Endothelial cell of umbilical vein (primary cell): ENCODE measurements at regions of chr15 and their contacts with region 1.

Region 1: GRCh38 chr15:51776952-51777574 is 25.7 kb downstream of the TMOD2 start:
- DNase-seq: peak; percentile 80
- H3K4me3 ChIP-seq: no peak overlapping the region
- H3K27ac ChIP-seq: no peak overlapping the region
- H3K4me1 ChIP-seq: no peaks in the 10 kb centered on the region
- H3K27me3 ChIP-seq: peaks cover 0 to 4% of the 10 kb centered on the region in 2 experiments
- CTCF ChIP-seq: peak; percentile 72 to 75
- POLR2A ChIP-seq: no peak

Region 2: GRCh38 chr15:51622604-51623370 is 154.3 kb before region 1 on chr15 and contains the start of gene DMXL2:
- CTCF ChIA-PET with region 1: interaction called, 27 read pairs
- POLR2A ChIA-PET with region 1: no interaction called
- dilution Hi-C with region 1: no loop called
- intact Hi-C with region 1: no loop called
- DNase-seq: peak; percentile 85
- H3K4me3 ChIP-seq: peak within 1 kb of the TSS; percentile 39 to 81 (median 66)
- H3K27ac ChIP-seq: no peak within 1 kb of the TSS
- H3K4me1 ChIP-seq: peaks cover 6% of the 10 kb centered on the region
- H3K27me3 ChIP-seq: peaks cover 2 to 3% of the 10 kb centered on the region in 2 experiments
- CTCF ChIP-seq: no peak
- POLR2A ChIP-seq: no peak
- total RNA-seq, gene DMXL2: 9.7 and 10.8 TPM in 2 replicates

Region 3: DNA sequence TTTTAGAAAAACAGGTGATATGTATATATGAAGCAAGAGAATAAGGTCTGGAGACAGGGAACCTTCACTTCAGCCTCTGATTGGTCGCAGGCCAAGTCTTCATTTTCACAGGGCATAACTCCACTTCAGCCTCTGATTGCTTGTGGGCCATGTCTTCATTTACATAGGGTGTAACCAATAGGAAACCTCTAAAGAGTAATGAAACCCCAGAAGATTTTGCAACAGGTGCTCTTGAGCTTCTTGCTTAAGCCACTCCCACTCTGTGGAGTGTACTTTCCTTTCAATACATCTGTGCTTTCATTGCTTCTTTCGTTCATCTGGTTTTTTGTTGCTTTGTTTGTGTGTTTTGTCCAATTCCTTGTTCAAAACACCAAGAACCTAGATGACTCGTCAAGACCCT is 118.4 kb before region 1 on chr15:
- CTCF ChIA-PET with region 1: interaction called, 45 read pairs
- POLR2A ChIA-PET with region 1: no interaction called
- dilution Hi-C with region 1: no loop called
- intact Hi-C with region 1: no loop called
- DNase-seq: no peak
- H3K4me3 ChIP-seq: no peak overlapping the region
- H3K27ac ChIP-seq: no peak overlapping the region
- H3K4me1 ChIP-seq: no peaks in the 10 kb centered on the region
- H3K27me3 ChIP-seq: peaks cover 2 to 4% of the 10 kb centered on the region in 2 experiments
- CTCF ChIP-seq: no peak
- POLR2A ChIP-seq: no peak

Region 4: DNA sequence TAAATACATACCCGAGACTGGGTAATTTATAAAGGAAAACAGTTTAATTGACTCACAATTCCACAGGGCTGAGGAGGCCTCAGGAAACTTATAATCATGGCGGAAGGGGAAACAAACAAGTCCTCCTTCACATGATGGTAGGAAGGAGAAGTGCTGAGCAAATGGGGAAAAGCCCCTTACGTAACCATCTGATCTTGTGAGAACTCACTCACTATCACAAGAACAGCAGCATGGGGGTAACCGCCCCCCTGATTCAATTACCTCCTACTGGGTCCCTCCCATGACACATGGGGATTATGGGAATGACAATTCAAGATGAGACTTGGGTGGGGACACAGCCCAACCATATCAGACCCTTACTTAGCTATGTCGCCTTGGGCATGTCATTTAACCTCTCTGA is 68.0 kb before region 1 on chr15:
- CTCF ChIA-PET with region 1: interaction called, 12 read pairs
- POLR2A ChIA-PET with region 1: no interaction called
- dilution Hi-C with region 1: no loop called
- intact Hi-C with region 1: no loop called
- DNase-seq: no peak
- H3K4me3 ChIP-seq: no peak overlapping the region
- H3K27ac ChIP-seq: no peak overlapping the region
- H3K4me1 ChIP-seq: no peaks in the 10 kb centered on the region
- H3K27me3 ChIP-seq: peaks cover 6 to 9% of the 10 kb centered on the region in 2 experiments
- CTCF ChIP-seq: no peak
- POLR2A ChIP-seq: no peak

Region 5: GRCh38 chr15:51750792-51751685 is 26.0 kb before region 1 on chr15 and contains the start of gene TMOD2:
- CTCF ChIA-PET with region 1: interaction called, 42 read pairs
- POLR2A ChIA-PET with region 1: no interaction called
- dilution Hi-C with region 1: no loop called
- intact Hi-C with region 1: loop called (anchors 1 kb)
- DNase-seq: no peak
- H3K4me3 ChIP-seq: peak within 1 kb of the TSS; percentile 26 to 54 (median 40)
- H3K27ac ChIP-seq: no peak within 1 kb of the TSS
- H3K4me1 ChIP-seq: peaks cover 3% of the 10 kb centered on the region
- H3K27me3 ChIP-seq: peaks cover 59 to 65% of the 10 kb centered on the region in 2 experiments
- CTCF ChIP-seq: no peak
- POLR2A ChIP-seq: no peak
- total RNA-seq, gene TMOD2: 2.5 and 2.7 TPM in 2 replicates

Region 6: GRCh38 chr15:51846463-51847230 is 69.6 kb after region 1 on chr15:
- CTCF ChIA-PET with region 1: interaction called, 6 read pairs
- POLR2A ChIA-PET with region 1: no interaction called
- dilution Hi-C with region 1: no loop called
- intact Hi-C with region 1: loop called (anchors 2 kb)
- DNase-seq: peak; percentile 97
- H3K4me3 ChIP-seq: peak overlapping the region in 1 of 3 experiments; percentile 24
- H3K27ac ChIP-seq: peak overlapping the region; percentile 93
- H3K4me1 ChIP-seq: peaks cover 71% of the 10 kb centered on the region
- H3K27me3 ChIP-seq: no peaks in the 10 kb centered on the region
- CTCF ChIP-seq: no peak
- POLR2A ChIP-seq: no peak

Region 7: DNA sequence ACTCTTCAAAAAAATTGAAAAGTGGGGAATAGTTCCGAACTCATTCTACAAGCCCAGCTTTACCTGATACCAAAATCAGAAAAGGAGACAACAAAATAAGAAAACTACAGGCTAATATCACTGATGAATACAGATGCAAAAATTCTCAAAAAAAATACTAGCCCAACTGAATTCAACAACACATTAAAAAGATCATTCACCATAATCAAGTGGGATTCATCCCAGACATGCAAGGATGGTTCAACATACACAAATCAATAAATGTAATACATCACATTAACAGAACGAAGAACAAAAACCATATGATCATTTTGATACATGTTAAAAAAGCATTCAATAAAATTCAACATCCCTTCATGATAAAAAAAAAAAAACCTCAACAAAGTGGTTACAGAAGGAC is 678.3 kb after region 1 on chr15:
- CTCF ChIA-PET with region 1: no interaction called
- POLR2A ChIA-PET with region 1: no interaction called
- dilution Hi-C with region 1: no loop called
- intact Hi-C with region 1: no loop called
- DNase-seq: no peak
- H3K4me3 ChIP-seq: no peak overlapping the region
- H3K27ac ChIP-seq: no peak overlapping the region
- H3K4me1 ChIP-seq: no peaks in the 10 kb centered on the region
- H3K27me3 ChIP-seq: no peaks in the 10 kb centered on the region
- CTCF ChIP-seq: no peak
- POLR2A ChIP-seq: no peak